HepG2 (cell line): ENCODE measurements at regions of chr9 and their contacts with region 1.

Region 1: GRCh38 chr9:94213511-94214124 is 45.5 kb upstream of the ZNF169 start:
- DNase-seq: peak; percentile 68
- ATAC-seq: peak; percentile 96
- H3K4me3 ChIP-seq: no peak overlapping the region
- H3K27ac ChIP-seq: no peak overlapping the region
- H3K4me1 ChIP-seq: 0 out of 2 replicates have a peak, but pooled peaks cover 4% of the 10 kb centered on the region
- H3K27me3 ChIP-seq: peaks cover 0 to 10% of the 10 kb centered on the region in 2 experiments; a peak in 2 of 5 replicates
- CTCF ChIP-seq: peak; percentile 92
- EP300 ChIP-seq: no peak
- POLR2A ChIP-seq: no peak
- RAD21 ChIP-seq: peak; percentile 92

Region 2: GRCh38 chr9:94014065-94014654 is 199.5 kb before region 1 on chr9:
- CTCF ChIA-PET with region 1: interaction called, 39 read pairs
- POLR2A ChIA-PET with region 1: interaction called, 3 read pairs
- in situ Hi-C with region 1: loop called (anchors 5 kb)
- intact Hi-C with region 1: loop called (anchors 1 kb)
- DNase-seq: peak; percentile 41
- ATAC-seq: peak; percentile 74
- H3K4me3 ChIP-seq: no peak overlapping the region
- H3K27ac ChIP-seq: no peak overlapping the region
- H3K4me1 ChIP-seq: no peaks in the 10 kb centered on the region
- H3K27me3 ChIP-seq: peaks cover 0 to 6% of the 10 kb centered on the region in 2 experiments; a peak in 1 of 5 replicates
- CTCF ChIP-seq: peak; percentile 68
- EP300 ChIP-seq: no peak
- POLR2A ChIP-seq: no peak
- RAD21 ChIP-seq: no peak; the same call in 1 of the 2 replicates